Colonic mucosa (tissue), 4 donors: ENCODE measurements at regions of chr2 and their contacts with region 1.

Region 1: DNA sequence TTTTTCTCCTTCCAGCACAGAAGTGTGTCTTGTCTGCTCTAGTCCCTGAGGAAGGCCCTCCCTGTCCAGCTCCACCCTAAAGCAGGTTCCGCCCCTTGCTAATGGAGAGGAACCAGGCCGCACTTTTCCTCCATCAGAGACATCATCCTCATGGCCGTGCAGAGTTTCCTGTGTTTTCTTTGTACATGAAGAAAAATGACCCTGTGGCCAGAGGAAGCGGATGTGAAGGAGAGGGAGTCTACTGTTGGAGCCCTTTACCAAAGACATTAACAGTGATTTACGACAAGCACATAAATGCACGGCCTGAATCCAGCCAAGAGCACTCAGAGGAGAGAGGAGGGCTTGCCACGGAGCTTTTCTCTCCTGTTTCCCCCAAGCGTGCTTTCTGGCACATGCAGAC is 109.5 kb downstream of the RNF144A start:
- DNase-seq: no peak
- H3K4me3 ChIP-seq: no peak overlapping the region
- H3K27ac ChIP-seq: no peak overlapping the region
- H3K4me1 ChIP-seq: peaks cover 4% of the 10 kb centered on the region
- H3K27me3 ChIP-seq: no peaks in the 10 kb centered on the region
- CTCF ChIP-seq: no peak

Region 2: DNA sequence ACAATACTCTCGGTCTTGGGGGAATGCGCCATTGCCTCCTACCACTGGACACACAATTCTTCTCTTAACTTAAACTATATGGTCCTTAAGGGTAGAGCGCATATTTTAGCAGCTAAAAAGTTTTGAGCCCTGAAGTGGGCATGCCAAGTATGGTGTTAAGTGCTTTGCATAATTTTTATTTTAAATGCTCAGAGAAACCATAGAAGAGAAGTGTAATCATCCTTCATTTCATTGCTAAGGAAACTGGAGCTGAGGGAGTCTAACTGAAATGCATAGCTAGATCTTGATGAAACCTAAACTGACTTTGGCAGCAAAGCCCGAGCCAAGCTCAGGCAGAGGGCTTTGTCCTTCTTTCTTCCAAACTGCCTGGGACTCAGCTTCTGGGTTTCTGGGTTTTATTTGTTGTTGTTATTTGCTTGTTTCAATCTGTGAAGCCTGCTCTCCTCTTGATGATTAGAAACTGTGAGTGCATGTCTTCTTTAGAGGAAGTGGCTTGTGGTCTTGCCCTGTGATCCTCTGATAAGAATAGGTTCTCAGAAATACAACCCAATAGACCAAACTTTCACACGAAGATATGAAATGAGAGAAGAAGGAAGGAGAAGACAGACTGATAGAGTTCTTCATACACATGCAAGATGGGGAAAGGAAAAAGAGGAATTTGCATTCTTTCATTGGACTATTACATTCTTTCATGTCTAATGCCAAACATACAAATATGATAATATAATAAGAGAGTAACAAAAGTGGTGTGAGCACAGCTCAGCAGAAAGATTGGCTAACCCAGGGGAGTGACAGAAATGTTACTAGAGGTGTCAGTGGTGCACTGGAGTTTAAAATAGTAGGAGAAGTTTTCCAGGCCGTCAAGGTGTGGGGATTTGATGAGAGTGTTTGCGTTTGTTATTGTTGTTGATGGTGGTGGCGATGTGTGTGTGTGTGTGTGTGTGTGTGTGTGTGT is 117.0 kb before region 1 on chr2:
- intact Hi-C with region 1: loop called (anchors 5 kb)
- DNase-seq: no peak
- H3K4me3 ChIP-seq: no peak overlapping the region
- H3K27ac ChIP-seq: no peak overlapping the region
- H3K4me1 ChIP-seq: no peaks in the 10 kb centered on the region
- H3K27me3 ChIP-seq: no peaks in the 10 kb centered on the region
- CTCF ChIP-seq: no peak

Region 3: DNA sequence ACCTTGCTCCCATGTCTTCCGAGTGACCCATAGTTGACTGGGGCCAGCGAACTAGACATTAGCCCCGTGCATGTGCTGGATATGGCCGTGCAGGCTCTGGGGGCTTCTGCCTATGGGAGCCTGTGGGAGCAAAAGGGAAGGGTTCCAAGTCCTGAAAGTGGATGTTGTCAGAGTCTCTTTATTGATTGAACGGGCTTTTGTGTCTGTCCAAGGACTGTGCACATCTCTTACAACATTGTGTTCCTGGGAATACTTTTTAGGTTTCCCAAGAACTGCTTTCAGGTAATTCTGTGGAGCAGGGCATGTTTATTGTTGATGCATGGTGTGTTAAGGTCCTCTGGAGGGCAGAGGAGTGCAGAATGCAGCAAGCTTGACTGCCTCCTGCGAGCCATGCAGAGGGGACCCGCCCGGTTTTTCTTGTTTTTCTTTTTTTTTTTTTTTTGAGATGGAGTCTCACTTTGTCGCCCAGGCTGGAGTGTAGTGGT is 104.5 kb before region 1 on chr2:
- intact Hi-C with region 1: loop called (anchors 5 kb)
- DNase-seq: no peak
- H3K4me3 ChIP-seq: no peak overlapping the region
- H3K27ac ChIP-seq: no peak overlapping the region
- H3K4me1 ChIP-seq: no peaks in the 10 kb centered on the region
- H3K27me3 ChIP-seq: no peaks in the 10 kb centered on the region
- CTCF ChIP-seq: no peak

Region 4: GRCh38 chr2:7102826-7103225 is 76.1 kb after region 1 on chr2:
- intact Hi-C with region 1: no loop called
- DNase-seq: no peak
- H3K4me3 ChIP-seq: no peak overlapping the region
- H3K27ac ChIP-seq: no peak overlapping the region
- H3K4me1 ChIP-seq: no peaks in the 10 kb centered on the region
- H3K27me3 ChIP-seq: no peaks in the 10 kb centered on the region
- CTCF ChIP-seq: no peak

Region 5: GRCh38 chr2:7169593-7169992 is 142.9 kb after region 1 on chr2:
- intact Hi-C with region 1: no loop called
- DNase-seq: no peak
- H3K4me3 ChIP-seq: no peak overlapping the region
- H3K27ac ChIP-seq: no peak overlapping the region
- H3K4me1 ChIP-seq: no peaks in the 10 kb centered on the region
- H3K27me3 ChIP-seq: no peaks in the 10 kb centered on the region
- CTCF ChIP-seq: no peak